Right cardiac atrium (tissue), 5 donors: ENCODE measurements at regions of chr5 and their contacts with region 1.

Region 1: DNA sequence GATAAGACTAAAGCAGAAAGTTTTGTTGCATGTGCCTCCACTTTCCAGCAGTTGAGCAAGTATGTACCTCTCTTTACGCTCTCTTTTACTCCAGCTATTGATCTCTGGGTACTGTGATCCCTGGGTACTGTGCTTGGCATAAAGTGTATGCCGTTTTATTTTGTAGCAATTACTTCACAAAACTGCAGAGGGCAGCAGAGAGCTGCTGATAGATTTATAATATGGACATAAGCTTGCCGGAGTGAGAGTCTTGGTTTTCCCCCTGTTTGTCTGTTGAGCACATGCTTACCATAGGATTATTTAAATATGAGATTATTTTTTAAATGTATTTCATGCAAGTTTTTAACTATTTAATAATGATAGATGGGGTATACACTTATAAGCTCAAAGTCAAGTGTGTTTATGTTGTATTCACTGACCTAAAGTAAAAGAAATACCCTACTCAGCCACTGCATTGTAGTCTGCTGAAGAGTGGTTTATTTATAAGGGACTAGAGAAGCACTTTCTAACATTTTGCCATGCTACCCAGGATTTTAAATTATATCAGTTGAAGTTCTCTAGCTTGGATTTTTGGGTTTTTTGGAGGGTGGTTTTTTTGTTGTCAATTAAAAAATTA is 13.0 kb downstream of the TTC1 start:
- DNase-seq: no peak
- ATAC-seq: peak; percentile 82 to 83
- H3K4me3 ChIP-seq: no peak overlapping the region
- H3K27ac ChIP-seq: no peak overlapping the region
- H3K4me1 ChIP-seq: no peaks in the 10 kb centered on the region
- H3K27me3 ChIP-seq: no peaks in the 10 kb centered on the region

Region 2: DNA sequence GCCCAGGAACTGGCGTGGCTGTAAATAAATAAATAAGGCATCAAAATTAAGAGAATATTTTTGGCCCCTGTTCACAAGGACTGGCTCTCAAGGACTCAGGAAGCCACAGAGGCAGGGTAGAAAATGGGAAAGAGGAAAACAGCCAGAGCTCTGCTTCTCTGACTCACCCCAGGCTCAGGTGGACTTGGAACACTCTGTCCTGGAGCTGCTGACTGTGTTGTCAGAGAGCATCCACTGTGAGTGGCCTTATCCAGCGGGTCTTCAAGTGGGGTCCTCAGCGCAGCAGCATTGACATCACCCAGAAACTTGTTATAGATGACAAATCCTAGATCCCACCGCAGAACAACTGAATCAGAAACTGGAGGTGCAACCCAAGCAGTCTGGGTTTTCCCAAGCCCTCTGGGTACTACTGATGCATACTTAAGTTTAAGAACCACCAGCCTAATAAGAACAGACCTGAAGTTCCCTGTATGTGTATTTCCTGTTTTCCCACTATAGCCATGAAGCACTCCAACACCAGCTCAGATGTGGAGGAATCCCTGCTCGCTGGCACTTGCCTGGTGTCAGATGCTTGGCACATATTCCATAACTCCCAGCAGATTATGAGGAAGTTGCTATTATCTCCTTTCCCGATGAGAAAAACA is 85.1 kb before region 1 on chr5:
- intact Hi-C with region 1: no loop called
- DNase-seq: no peak
- ATAC-seq: peak; percentile 61
- H3K4me3 ChIP-seq: no peak overlapping the region
- H3K27ac ChIP-seq: peak overlapping the region; percentile 58
- H3K4me1 ChIP-seq: no peaks in the 10 kb centered on the region
- H3K27me3 ChIP-seq: no peaks in the 10 kb centered on the region

Region 3: DNA sequence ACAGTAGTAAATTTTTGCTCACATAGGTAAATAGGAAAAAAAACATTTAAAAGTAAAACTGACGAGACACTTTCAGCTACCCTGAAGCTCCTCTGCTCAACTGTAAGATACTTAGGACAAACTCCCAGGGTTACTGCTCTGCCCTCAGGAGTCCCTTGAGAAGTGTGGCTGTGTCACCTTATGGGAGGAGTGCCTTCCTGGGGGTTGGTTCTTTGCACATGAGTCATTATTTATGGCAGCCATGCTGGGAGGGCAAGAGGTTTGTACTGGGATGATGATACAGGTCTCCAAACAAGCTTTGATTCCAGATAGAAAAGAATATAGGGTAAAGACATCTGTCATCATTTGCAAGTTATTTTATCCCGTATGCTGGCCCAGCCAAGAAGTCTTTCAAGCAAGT is 32.9 kb after region 1 on chr5:
- intact Hi-C with region 1: no loop called
- DNase-seq: no peak
- ATAC-seq: no peak
- H3K4me3 ChIP-seq: no peak overlapping the region
- H3K27ac ChIP-seq: no peak overlapping the region
- H3K4me1 ChIP-seq: no peaks in the 10 kb centered on the region
- H3K27me3 ChIP-seq: no peaks in the 10 kb centered on the region

Region 4: DNA sequence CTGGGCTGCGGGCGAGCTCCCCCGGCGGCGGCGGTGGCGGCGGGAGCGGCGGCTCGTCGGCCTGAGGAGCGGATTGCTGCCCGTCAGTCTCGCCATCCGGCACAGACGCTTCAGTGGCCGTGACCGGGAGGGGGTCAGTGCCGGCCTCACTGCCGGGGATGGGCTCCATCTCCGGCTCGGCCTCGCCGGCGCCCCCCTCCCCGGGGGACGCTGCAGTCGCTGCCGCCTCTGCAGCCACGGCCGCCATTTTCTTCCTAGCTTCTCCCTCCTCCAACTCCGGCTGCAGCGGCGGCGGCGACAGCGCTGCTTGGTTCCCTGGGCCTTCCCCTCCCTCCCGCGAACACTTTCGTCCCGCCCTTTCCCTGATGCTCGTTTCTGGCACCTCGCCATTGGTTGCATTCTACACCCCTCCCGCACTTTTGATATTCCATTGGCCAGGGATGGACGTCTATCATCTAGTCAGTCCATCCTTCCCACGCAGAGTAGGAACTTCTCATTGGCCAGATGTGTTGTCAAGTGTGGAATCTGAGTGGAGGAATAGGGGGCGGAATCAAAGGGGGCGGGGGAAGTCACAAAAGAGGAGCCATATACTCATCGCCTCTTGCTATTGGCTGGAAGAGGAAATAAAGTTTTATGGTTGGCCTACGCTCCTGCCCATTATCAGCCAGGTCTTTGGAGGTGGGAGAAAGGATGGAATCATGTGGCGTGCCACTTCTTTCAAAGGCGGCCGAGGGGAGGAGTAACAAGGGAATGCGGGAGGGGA is 97.4 kb after region 1 on chr5 and contains the start of gene PWWP2A:
- intact Hi-C with region 1: loop called in 1 of 4 experiments (anchors 10 kb)
- DNase-seq: peak; percentile 99
- ATAC-seq: peak; percentile 98
- H3K4me3 ChIP-seq: peak within 1 kb of the TSS; percentile 68
- H3K27ac ChIP-seq: peak within 1 kb of the TSS; percentile 88
- H3K4me1 ChIP-seq: no peaks in the 10 kb centered on the region
- H3K27me3 ChIP-seq: no peaks in the 10 kb centered on the region
- total RNA-seq, gene PWWP2A: 11.6 to 18.2 (median 14.4) TPM

Region 5: GRCh38 chr5:160199410-160199911 is 177.5 kb after region 1 on chr5:
- intact Hi-C with region 1: loop called in 2 of 4 experiments (anchors 5 to 10 kb)
- DNase-seq: peak; percentile 76 to 92 (median 91)
- ATAC-seq: peak; percentile 96
- H3K4me3 ChIP-seq: peak overlapping the region; percentile 25
- H3K27ac ChIP-seq: no peak overlapping the region
- H3K4me1 ChIP-seq: peaks cover 8% of the 10 kb centered on the region
- H3K27me3 ChIP-seq: no peaks in the 10 kb centered on the region

Region 6: GRCh38 chr5:160342403-160342941 is 320.5 kb after region 1 on chr5:
- intact Hi-C with region 1: loop called (anchors 5 to 10 kb)
- DNase-seq: no peak
- ATAC-seq: peak; percentile 19 to 28
- H3K4me3 ChIP-seq: no peak overlapping the region
- H3K27ac ChIP-seq: no peak overlapping the region
- H3K4me1 ChIP-seq: peaks cover 4% of the 10 kb centered on the region
- H3K27me3 ChIP-seq: no peaks in the 10 kb centered on the region

Region 7: DNA sequence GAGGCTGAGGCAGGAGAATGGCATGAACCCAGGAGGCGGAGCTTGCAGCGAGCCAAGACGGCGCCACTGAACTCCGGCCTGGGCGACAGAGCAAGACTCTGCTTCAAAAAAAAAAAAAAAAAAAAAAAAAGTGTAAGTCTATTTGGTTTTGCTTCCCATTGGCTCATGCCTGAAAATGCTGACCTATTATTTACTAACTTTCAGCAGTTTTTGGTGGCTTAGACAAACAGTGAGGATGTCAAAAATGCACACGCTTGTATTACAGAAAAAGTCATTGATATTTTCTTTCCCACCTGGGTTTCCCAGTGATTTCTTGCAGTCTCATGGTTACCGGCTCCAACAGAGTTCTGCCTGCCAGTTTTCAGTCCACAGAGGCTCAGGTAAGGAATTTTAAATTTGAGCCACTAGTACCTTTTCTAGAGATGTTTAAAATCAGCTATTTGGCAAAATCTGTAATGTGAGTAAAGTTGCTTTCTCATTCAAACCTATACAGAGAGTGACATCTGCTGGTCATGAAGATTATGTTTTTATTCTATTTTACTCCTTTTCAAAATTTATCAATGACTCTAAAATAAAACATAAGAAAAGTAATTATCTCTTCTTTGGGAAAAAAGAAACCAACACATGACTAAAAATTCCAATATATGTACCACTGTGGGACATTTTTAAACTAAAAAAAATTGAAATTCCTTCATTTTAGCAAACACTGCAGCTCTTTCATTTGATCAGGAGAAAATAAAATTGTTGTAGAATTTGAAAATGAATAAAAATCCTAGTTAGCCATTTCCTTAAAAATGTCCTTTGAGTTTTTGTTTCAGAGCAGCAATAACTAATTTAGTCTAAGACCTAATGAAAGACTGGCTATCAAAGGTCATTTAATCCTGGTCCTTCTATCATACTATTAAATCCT is 369.1 kb after region 1 on chr5:
- intact Hi-C with region 1: loop called in 1 of 4 experiments (anchors 5 kb)
- DNase-seq: no peak
- ATAC-seq: peak in 1 of 2 donors; percentile 42
- H3K4me3 ChIP-seq: no peak overlapping the region
- H3K27ac ChIP-seq: no peak overlapping the region
- H3K4me1 ChIP-seq: peaks cover 3% of the 10 kb centered on the region
- H3K27me3 ChIP-seq: no peaks in the 10 kb centered on the region